Activated naive CD4-positive, alpha-beta T cell treated with anti-CD3 and anti-CD28 coated beads for 36 hours (primary cell): ENCODE measurements at regions of chr4 and their contacts with region 1.

Region 1: DNA sequence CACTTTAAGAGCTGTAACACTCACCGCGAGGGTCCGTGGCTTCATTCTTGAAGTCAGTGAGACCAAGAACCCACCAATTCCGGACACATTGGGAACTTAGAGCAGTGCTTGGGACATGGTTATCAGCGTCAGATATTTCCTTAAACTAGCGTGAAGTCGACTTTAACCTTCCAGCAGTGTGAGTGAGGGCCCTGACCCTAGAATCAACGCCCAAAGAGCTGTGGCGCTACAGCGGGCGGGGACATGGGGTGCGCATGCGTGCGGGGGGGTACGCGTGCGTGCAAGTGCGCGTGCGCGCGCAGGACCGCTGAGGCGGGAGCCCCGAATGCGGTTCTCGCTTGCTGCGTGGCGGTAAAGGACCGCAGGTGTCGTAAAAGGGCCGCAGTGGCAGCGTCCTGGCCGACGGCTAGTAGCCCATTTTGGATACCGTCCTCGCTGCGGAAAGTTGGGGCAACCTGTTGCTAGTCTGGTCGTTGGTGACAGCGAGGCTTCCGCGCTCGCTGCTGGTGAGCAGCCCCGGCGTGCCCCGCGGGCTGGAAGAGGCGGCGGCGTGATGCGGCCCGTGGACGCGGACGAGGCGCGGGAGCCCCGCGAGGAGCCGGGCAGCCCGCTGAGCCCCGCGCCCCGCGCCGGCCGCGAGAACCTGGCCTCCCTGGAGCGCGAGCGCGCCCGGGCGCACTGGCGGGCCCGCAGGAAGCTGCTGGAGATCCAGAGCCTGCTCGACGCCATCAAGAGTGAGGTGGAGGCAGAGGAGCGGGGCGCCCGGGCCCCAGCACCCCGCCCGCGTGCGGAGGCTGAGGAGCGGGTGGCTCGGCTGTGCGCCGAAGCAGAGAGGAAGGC is 19.8 kb upstream of the S100P start:
- DNase-seq: peak; percentile 96
- H3K4me3 Mint-ChIP-seq: peak overlapping the region; percentile 96
- H3K27ac Mint-ChIP-seq: peak overlapping the region; percentile 98
- H3K4me1 Mint-ChIP-seq: peaks cover 45% of the 10 kb centered on the region
- H3K27me3 Mint-ChIP-seq: no peaks in the 10 kb centered on the region

Region 2: DNA sequence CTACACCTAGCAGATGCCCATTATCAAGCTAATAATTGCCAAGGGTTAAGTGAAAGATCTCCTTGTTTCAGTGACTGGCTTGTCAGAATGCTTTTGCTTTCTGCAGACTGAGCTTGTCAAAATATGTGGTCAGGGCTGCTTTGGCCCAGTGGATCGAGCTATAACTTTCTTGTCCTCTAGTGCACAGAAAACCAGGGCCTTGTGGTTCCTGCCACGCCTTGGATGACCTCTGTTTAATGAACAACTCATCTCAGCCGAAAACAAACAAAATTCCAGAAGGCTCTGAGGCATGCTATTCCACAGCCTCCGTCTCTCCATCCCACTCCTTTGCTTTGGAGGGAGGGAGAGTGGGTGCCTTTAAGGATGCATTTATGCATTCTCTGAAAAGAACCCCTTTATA is 951.6 kb before region 1 on chr4:
- CTCF ChIA-PET with region 1: no interaction called
- intact Hi-C with region 1: no loop called
- DNase-seq: no peak
- H3K4me3 Mint-ChIP-seq: no peak overlapping the region
- H3K27ac Mint-ChIP-seq: no peak overlapping the region
- H3K4me1 Mint-ChIP-seq: no peaks in the 10 kb centered on the region
- H3K27me3 Mint-ChIP-seq: peaks cover 2% of the 10 kb centered on the region

Region 3: DNA sequence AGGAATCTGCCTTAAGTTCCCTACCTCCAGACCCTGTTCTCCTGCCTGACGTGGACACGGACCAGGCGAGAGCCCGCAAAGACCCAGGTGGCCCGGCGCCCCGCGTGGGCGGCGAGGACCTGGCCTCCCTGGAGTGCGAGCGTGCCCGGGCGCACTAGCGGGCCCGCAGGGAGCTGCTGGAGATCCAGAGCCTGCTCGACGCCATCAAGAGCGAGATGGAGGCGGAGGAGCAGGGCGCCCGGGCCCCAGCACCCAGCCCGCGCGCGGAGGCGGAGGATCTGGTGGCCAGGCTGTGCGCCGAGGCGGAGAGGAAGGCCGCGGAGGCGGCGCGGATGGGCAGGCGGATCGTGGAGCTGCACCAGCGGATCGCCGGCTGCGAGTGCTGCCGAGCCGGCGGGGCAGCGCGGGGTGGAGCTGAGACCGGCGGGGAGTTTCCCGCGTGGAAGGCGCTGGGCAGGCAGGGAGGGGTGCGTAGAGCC is 15.2 kb before region 1 on chr4:
- CTCF ChIA-PET with region 1: interaction called, 27 read pairs
- intact Hi-C with region 1: no loop called
- DNase-seq: peak; percentile 54
- H3K4me3 Mint-ChIP-seq: peak overlapping the region; percentile 67
- H3K27ac Mint-ChIP-seq: no peak overlapping the region
- H3K4me1 Mint-ChIP-seq: peaks cover 15% of the 10 kb centered on the region
- H3K27me3 Mint-ChIP-seq: no peaks in the 10 kb centered on the region

Region 4: GRCh38 chr4:6695660-6696630 is 22.1 kb after region 1 on chr4:
- CTCF ChIA-PET with region 1: interaction called, 96 read pairs
- intact Hi-C with region 1: loop called (anchors 1 kb)
- DNase-seq: peak; percentile 63
- H3K4me3 Mint-ChIP-seq: peak overlapping the region; percentile 65
- H3K27ac Mint-ChIP-seq: peak overlapping the region; percentile 96
- H3K4me1 Mint-ChIP-seq: peaks cover 82% of the 10 kb centered on the region
- H3K27me3 Mint-ChIP-seq: no peaks in the 10 kb centered on the region

Region 5: DNA sequence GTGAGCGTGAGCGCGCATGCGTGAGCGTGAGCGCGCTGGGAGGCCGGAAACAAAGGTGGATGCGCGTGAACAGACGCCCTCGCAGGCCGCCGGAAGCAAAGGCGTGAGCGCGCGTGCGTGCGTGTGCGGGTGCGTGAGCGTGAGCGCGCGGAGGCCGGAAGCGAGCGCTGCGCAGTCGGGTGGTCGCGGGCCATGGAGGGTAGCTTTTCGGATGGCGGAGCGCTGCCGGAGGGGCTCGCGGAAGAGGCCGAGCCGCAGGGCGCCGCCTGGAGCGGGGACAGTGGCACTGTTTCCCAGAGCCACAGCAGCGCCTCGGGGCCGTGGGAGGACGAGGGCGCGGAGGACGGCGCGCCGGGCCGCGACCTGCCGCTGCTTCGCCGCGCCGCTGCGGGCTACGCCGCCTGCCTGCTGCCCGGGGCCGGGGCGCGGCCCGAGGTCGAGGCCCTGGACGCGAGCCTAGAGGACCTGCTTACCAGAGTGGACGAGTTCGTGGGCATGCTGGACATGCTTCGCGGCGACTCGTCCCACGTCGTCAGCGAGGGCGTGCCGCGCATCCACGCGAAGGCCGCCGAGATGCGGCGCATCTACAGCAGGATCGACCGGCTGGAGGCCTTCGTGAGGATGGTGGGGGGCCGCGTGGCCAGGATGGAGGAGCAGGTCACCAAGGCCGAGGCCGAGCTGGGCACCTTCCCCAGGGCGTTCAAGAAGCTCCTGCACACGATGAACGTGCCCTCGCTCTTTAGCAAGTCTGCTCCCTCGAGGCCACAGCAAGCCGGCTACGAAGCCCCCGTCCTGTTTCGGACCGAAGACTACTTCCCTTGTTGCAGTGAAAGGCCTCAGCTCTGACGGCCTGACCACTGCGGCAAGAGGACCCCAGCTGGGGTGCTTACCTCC is 42.4 kb after region 1 on chr4 and contains the start of gene BLOC1S4:
- CTCF ChIA-PET with region 1: interaction called, 96 read pairs
- intact Hi-C with region 1: loop called (anchors 1 kb)
- DNase-seq: peak; percentile 88
- H3K4me3 Mint-ChIP-seq: peak within 1 kb of the TSS; percentile 96
- H3K27ac Mint-ChIP-seq: peak within 1 kb of the TSS; percentile 95
- H3K4me1 Mint-ChIP-seq: peaks cover 26% of the 10 kb centered on the region
- H3K27me3 Mint-ChIP-seq: no peaks in the 10 kb centered on the region
- total RNA-seq, gene BLOC1S4: 11.0 to 11.8 TPM

Region 6: GRCh38 chr4:6926681-6927478 is 253.0 kb after region 1 on chr4:
- CTCF ChIA-PET with region 1: no interaction called
- intact Hi-C with region 1: no loop called
- DNase-seq: peak; percentile 74
- H3K4me3 Mint-ChIP-seq: peak overlapping the region; percentile 49
- H3K27ac Mint-ChIP-seq: peak overlapping the region; percentile 85
- H3K4me1 Mint-ChIP-seq: peaks cover 67% of the 10 kb centered on the region
- H3K27me3 Mint-ChIP-seq: no peaks in the 10 kb centered on the region

Region 7: DNA sequence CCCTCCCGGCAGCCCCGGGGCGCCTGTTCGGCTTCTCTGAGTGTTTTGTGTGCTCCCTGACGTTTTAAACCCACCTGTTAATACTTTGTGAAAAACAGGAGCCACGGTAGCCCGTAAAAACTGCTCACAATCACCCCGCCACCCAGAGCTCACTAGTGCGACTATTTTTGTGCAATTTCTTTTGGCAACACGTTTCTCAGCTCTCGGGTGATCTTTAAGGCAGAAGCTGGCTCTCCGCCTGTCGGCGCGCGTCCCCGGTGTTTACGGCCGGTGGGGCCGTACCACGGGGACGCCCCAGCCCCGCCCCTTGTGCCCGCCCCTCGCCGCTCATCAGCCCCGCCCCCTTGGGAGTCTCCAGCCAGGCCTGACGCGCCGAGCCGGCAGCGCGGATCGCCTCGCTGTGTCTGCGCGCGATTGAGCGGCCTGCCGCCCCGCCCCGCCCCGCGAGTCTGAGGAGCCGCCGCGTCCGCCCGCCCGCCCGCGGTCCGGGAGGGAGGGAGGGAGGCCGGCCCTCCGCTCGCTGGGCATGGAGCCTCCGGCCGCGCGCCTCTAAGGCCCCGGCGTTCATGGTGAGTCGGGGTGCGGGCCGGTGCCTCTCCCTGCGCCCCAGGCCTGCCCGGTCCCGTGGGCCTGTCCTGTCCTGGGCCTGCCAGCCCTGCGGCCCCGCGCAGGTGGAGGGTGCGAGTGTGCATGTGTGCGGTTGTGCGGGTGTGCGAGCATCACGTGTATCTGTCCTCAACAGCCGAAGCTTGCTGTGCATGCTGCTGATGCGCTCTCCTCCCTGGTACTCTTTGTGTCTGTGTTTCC is 313.1 kb after region 1 on chr4:
- CTCF ChIA-PET with region 1: no interaction called
- intact Hi-C with region 1: loop called (anchors 1 kb)
- DNase-seq: peak; percentile 94
- H3K4me3 Mint-ChIP-seq: peak overlapping the region; percentile 94
- H3K27ac Mint-ChIP-seq: peak overlapping the region; percentile 93
- H3K4me1 Mint-ChIP-seq: peaks cover 70% of the 10 kb centered on the region
- H3K27me3 Mint-ChIP-seq: no peaks in the 10 kb centered on the region